HEK293T (cell line): ENCODE measurements at regions of chr22 and their contacts with region 1.

Region 1: GRCh38 chr22:39306581-39307361 is 12.7 kb downstream of the RPL3 start:
- DNase-seq: no peak

Region 2: GRCh38 chr22:39170825-39171622 is 135.7 kb before region 1 on chr22:
- CTCF ChIA-PET with region 1: interaction called, 17 read pairs
- POLR2A ChIA-PET with region 1: interaction called, 19 read pairs
- DNase-seq: peak; percentile 92

Region 3: GRCh38 chr22:39273950-39274887 is 32.6 kb before region 1 on chr22:
- CTCF ChIA-PET with region 1: no interaction called
- POLR2A ChIA-PET with region 1: no interaction called
- DNase-seq: no peak

Region 4: DNA sequence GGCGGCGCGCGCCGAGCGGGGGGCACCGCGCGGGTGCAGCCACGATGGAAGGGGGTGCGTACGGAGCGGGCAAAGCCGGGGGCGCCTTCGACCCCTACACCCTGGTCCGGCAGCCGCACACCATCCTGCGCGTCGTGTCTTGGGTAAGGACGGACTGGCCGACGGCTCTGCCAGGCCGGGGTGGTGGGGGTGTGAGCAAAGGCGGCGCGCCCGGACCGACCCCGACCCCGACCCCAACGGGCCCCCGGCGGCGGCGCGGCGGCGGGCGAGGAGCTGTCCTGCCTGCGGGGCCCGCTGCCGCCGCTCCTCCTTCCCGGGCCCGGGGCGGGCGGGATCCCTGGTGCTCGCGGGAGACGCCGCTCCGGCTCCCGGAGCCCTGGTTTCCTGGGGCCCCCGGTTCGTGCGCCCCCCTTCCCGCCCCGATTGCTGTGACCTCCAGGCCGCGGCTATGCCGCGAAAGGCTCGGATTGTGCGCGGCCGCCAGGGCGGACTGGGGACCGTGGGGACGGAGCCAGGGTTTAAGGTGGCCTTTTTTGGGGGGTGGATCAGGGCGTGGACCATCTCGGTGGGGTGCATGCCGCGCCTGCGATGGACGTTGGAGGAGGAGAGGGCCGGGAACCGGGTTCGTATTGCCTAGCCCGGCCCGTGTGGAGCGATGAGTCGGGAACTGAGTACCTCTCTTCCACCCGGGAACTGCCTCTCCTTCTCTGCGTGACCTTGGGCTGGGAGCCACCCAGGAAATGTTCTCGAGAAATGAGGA is 43.4 kb after region 1 on chr22 and contains the start of gene SYNGR1:
- CTCF ChIA-PET with region 1: no interaction called
- POLR2A ChIA-PET with region 1: no interaction called
- DNase-seq: peak; percentile 53